ENCODE measurements at regions of chr14 and their contacts with region 1.

Region 1: GRCh38 chr14:68297876-68298469 is 478.4 kb downstream of the RAD51B start:
- DNase-seq: peak; percentile 38
- ATAC-seq: peak; percentile 35
- H3K4me3 ChIP-seq: no peak overlapping the region
- H3K27ac ChIP-seq: no peak overlapping the region
- H3K4me1 ChIP-seq: no peaks in the 10 kb centered on the region; the same call in 1 of the 2 replicates
- H3K27me3 ChIP-seq: no peaks in the 10 kb centered on the region
- CTCF ChIP-seq: peak; percentile 51
- POLR2A ChIP-seq: no peak
- RAD21 ChIP-seq: peak; percentile 61

Region 2: DNA sequence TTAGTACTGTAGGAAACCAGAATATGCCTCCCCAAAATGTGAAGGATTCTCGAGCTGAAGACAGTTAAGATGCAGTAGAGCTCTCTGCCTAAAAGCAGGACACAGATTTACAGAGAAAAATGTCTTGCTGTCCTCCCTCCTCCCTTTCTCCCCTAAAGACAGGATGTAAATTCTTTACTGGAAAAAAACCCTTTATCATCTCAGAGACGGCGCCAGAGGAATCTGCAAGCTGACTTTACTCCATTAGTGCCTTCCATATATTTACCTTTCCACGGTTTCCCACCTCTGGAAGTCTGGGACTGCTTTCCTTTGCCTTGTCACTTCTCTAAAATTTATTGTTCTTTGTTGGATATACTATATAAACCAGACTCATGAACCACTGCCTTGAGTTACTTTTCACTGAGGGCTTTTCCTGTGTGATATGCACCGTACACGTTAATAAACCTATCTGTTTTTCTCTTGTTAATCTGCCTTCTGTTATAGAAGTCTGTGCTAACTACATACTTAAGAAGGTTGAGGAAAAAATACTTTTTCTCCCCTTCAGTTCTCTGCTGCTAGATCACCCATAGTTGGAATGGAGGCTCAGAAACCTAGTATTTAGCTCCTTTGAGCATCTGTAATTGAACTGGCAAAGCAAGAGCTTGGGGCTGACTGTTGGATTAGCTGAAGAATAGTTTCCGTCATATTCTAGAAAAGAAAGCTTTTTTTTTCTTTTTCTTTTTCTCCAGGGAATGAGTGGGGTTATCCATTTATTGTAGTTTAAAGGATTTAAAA is 378.5 kb before region 1 on chr14:
- CTCF ChIA-PET with region 1: no interaction called
- POLR2A ChIA-PET with region 1: interaction called, 12 read pairs
- dilution Hi-C with region 1: no loop called
- in situ Hi-C with region 1: no loop called
- intact Hi-C with region 1: no loop called
- DNase-seq: peak; percentile 21
- ATAC-seq: peak; percentile 75
- H3K4me3 ChIP-seq: no peak overlapping the region
- H3K27ac ChIP-seq: no peak overlapping the region
- H3K4me1 ChIP-seq: peaks cover 4% of the 10 kb centered on the region; the same call in 1 of the 2 replicates
- H3K27me3 ChIP-seq: no peaks in the 10 kb centered on the region
- CTCF ChIP-seq: no peak
- POLR2A ChIP-seq: no peak
- RAD21 ChIP-seq: no peak

Region 3: GRCh38 chr14:68412505-68413496 is 114.8 kb after region 1 on chr14:
- CTCF ChIA-PET with region 1: no interaction called
- POLR2A ChIA-PET with region 1: no interaction called
- dilution Hi-C with region 1: no loop called
- in situ Hi-C with region 1: no loop called
- intact Hi-C with region 1: no loop called
- DNase-seq: no peak
- ATAC-seq: no peak
- H3K4me3 ChIP-seq: no peak overlapping the region
- H3K27ac ChIP-seq: no peak overlapping the region
- H3K4me1 ChIP-seq: peaks cover 7% of the 10 kb centered on the region
- H3K27me3 ChIP-seq: no peaks in the 10 kb centered on the region
- CTCF ChIP-seq: no peak
- POLR2A ChIP-seq: no peak
- RAD21 ChIP-seq: no peak